Activated T-helper 1 cell treated with anti-CD3 and anti-CD28 coated beads, Interleukin-12 subunit alpha, Interleukin-12 subunit beta, Interleukin-2, Interleukin-4 antibody, amounts not matched to agents 30 ng/mL and 10 ng/mL and 1 ng/mL, durations not matched to agents 14 hours and 24 hours and 36 hours (primary cell): ENCODE measurements at regions of chr11 and their contacts with region 1.

Region 1: GRCh38 chr11:102451681-102452460 is 694 bp downstream of the TMEM123 start:
- DNase-seq: peak; percentile 75
- H3K4me3 Mint-ChIP-seq: peak overlapping the region; percentile 93
- H3K27ac Mint-ChIP-seq: peak overlapping the region; percentile 94
- H3K4me1 Mint-ChIP-seq: peaks cover 86% of the 10 kb centered on the region
- H3K27me3 Mint-ChIP-seq: peaks cover 3% of the 10 kb centered on the region

Region 2: GRCh38 chr11:102317099-102317767 is 134.6 kb before region 1 on chr11 and contains the start of gene BIRC3:
- intact Hi-C with region 1: loop called (anchors 1 kb)
- DNase-seq: peak; percentile 93
- H3K4me3 Mint-ChIP-seq: peak within 1 kb of the TSS; percentile 97
- H3K27ac Mint-ChIP-seq: peak within 1 kb of the TSS; percentile 95
- H3K4me1 Mint-ChIP-seq: peaks cover 70% of the 10 kb centered on the region
- H3K27me3 Mint-ChIP-seq: no peaks in the 10 kb centered on the region
- total RNA-seq, gene BIRC3: 101 and 108 TPM in 2 replicates

Region 3: DNA sequence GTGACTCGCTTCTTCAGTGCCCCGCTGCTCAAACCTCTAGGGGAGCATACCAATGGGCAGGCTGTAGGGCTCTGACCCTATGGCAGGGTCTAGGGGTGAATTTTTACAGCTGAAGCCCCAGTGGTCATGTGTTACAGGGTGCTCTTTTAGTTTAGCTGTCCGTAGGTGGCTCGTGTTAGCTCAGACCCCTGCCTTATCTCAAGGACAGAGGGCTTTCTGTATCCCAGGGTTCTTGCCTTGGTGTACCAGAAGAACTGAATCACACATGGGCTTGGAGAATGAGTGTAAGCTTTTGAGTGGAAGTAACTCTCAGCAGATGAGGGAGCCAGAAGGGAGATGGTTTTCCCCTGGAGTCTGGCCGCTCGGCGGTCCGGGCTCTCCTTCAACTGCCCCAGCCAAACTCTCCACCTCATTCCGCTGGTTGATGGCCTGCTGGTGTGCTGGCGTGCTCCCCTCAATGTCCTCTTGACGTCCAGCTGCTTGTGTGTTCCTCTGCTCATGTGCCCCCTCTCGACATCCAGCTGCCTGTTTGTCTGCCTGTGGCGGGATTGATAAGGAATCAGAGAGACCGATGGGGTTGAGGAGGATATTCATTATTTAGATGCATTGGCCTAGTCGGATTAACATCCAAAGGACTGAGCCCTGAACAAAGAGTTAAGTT is 67.3 kb before region 1 on chr11:
- intact Hi-C with region 1: no loop called
- DNase-seq: no peak
- H3K4me3 Mint-ChIP-seq: no peak overlapping the region
- H3K27ac Mint-ChIP-seq: no peak overlapping the region
- H3K4me1 Mint-ChIP-seq: peaks cover 21% of the 10 kb centered on the region
- H3K27me3 Mint-ChIP-seq: no peaks in the 10 kb centered on the region

Region 4: GRCh38 chr11:102396708-102397563 is 54.9 kb before region 1 on chr11:
- intact Hi-C with region 1: loop called (anchors 1 kb)
- DNase-seq: no peak
- H3K4me3 Mint-ChIP-seq: peak overlapping the region; percentile 45
- H3K27ac Mint-ChIP-seq: peak overlapping the region; percentile 63
- H3K4me1 Mint-ChIP-seq: peaks cover 52% of the 10 kb centered on the region
- H3K27me3 Mint-ChIP-seq: no peaks in the 10 kb centered on the region

Region 5: GRCh38 chr11:102469172-102469821 is 17.4 kb after region 1 on chr11:
- intact Hi-C with region 1: loop called (anchors 1 kb)
- DNase-seq: no peak
- H3K4me3 Mint-ChIP-seq: peak overlapping the region; percentile 1
- H3K27ac Mint-ChIP-seq: peak overlapping the region; percentile 4
- H3K4me1 Mint-ChIP-seq: peaks cover 93% of the 10 kb centered on the region
- H3K27me3 Mint-ChIP-seq: peaks cover 2% of the 10 kb centered on the region

Region 6: DNA sequence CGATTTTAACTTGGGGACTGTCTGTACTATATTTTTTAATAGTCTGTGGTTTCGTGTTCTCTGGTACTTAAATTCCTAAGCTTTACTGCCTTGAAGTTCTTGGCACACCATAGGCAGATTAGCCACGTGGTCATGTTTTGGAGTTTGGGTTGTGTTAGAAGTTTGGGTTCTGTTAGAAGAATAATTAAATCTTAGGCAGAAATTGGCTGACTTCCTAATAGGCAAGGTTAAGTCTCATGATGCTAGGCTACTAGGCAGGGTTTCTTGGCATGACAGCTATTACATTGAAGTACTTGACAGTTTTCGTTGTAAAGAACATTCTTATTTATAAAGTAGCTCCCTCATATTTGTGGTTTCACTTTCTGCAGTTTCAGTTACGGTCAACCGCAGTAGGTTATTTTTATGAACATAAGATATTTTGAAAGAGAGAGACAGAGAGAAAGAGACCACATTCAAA is 108.7 kb after region 1 on chr11:
- intact Hi-C with region 1: loop called (anchors 5 kb)
- DNase-seq: no peak
- H3K4me3 Mint-ChIP-seq: peak overlapping the region; percentile 63
- H3K27ac Mint-ChIP-seq: no peak overlapping the region
- H3K4me1 Mint-ChIP-seq: peaks cover 50% of the 10 kb centered on the region
- H3K27me3 Mint-ChIP-seq: peaks cover 2% of the 10 kb centered on the region

Region 7: DNA sequence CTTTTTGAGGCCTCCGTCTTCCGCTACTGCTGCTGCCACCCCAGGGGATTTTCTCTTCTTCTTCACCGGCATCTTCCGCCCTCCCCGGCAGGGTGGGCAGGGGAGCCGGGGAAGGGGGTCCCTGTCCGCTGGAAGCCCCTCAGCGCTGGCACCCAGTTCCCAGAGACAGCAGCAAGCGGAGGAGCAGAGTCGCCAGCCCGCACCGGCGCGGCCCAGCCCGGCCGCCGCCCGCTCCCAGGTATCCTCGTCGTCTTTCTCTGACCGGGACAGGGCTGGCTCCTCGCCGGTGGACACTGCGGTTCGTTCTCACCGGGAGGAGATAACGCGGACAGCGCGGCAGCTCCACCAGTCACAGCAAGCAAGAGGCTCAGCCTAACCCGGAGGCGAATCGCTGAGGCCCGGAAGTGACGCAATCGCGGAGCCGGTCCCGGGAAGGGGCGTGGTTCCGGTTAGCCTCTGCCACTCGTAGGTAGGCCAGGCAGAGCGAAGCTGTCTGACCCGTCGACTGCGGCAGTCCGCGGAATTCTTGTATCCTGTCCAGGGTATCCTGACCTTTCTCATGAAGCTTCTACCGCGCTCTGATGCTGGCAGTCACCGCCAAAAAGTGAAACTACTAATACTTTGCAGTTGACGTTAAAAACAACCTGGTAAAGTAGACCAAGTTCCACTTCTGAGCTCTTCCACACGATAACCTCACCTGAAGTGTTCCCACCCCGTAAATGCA is 640.1 kb after region 1 on chr11 and contains the start of gene DCUN1D5:
- intact Hi-C with region 1: loop called (anchors 10 kb)
- DNase-seq: peak; percentile 94
- H3K4me3 Mint-ChIP-seq: peak within 1 kb of the TSS; percentile 94
- H3K27ac Mint-ChIP-seq: peak within 1 kb of the TSS; percentile 95
- H3K4me1 Mint-ChIP-seq: peaks cover 37% of the 10 kb centered on the region
- H3K27me3 Mint-ChIP-seq: peaks cover 22% of the 10 kb centered on the region
- total RNA-seq, gene DCUN1D5: 73.9 and 78.9 TPM in 2 replicates